CD4-positive, alpha-beta T cell (primary cell): ENCODE measurements at regions of chr6 and their contacts with region 1.

Region 1: DNA sequence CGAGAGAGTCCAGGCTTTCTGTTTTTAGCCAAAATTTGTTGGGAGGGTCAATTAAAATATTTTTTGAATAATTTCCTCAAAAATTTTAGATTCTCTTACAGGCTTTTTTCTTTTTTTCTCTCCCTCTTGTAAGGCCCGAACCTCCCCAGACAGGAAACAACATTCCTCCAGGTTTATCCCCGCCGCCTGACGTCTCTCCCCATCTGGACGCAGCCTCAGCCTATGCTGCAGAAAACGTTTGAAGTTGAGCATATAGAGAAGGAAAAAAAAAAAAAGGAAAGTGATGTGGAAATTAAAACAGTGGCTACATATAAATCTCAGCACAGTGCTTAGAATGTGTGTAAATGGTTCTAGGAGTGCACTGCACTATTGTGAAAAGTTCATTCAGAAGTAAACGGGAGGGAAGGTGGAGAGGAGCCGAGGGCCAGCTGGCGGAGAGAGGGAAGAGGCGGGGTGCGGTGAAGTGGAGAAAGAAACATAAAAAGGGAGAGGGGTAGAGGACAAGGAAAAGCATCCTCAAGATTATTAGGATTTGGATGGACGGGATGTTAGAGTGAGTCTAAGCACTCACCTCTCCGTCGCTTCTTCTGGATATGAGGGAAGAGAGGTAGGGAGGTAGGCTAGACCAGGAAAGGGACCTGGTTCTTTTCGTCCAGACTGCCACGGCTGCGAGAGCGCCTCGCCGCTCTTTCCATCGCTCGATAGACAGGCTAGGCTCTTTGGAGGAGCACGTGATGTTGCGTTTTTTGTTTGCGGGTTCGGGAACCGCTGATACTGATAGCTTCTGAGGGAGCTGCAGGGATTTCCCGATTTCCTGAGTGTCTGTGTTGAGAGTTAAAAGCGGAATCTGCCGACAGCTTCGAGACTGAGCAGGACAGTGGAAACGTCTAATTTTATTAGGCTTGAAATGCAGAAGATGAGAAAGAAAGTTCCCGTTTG is 98.7 kb downstream of the TRIM27 start:
- DNase-seq: no peak
- ATAC-seq: no peak
- H3K4me3 ChIP-seq: no peak overlapping the region
- H3K4me3 Mint-ChIP-seq: no peak overlapping the region
- H3K27ac ChIP-seq: no peak overlapping the region
- H3K27ac Mint-ChIP-seq: no peak overlapping the region
- H3K4me1 ChIP-seq: no peaks in the 10 kb centered on the region
- H3K4me1 Mint-ChIP-seq: peaks cover 11% of the 10 kb centered on the region
- H3K27me3 ChIP-seq: peaks cover 54 to 82% of the 10 kb centered on the region in 2 experiments
- H3K27me3 Mint-ChIP-seq: peaks cover 93% of the 10 kb centered on the region
- CTCF ChIP-seq: no peak

Region 2: GRCh38 chr6:28838634-28839442 is 13.8 kb after region 1 on chr6:
- CTCF ChIA-PET with region 1: no interaction called
- POLR2A ChIA-PET with region 1: no interaction called
- intact Hi-C with region 1: no loop called
- DNase-seq: peak; percentile 58 to 90 (median 74)
- ATAC-seq: peak; percentile 62
- H3K4me3 ChIP-seq: peak overlapping the region; percentile 65
- H3K4me3 Mint-ChIP-seq: peak overlapping the region; percentile 76
- H3K27ac ChIP-seq: peak overlapping the region; percentile 12 to 38
- H3K27ac Mint-ChIP-seq: peak overlapping the region; percentile 96
- H3K4me1 ChIP-seq: peaks cover 14% of the 10 kb centered on the region
- H3K4me1 Mint-ChIP-seq: peaks cover 22% of the 10 kb centered on the region
- H3K27me3 ChIP-seq: peaks cover 3 to 22% of the 10 kb centered on the region in 2 experiments
- H3K27me3 Mint-ChIP-seq: peaks cover 49% of the 10 kb centered on the region
- CTCF ChIP-seq: peak; percentile 77

Region 3: GRCh38 chr6:29376003-29376402 is 550.9 kb after region 1 on chr6:
- CTCF ChIA-PET with region 1: no interaction called
- POLR2A ChIA-PET with region 1: no interaction called
- intact Hi-C with region 1: loop called in 1 of 2 experiments (anchors 10 kb)
- DNase-seq: no peak
- ATAC-seq: no peak
- H3K4me3 ChIP-seq: no peak overlapping the region
- H3K4me3 Mint-ChIP-seq: no peak overlapping the region
- H3K27ac ChIP-seq: no peak overlapping the region
- H3K27ac Mint-ChIP-seq: no peak overlapping the region
- H3K4me1 ChIP-seq: no peaks in the 10 kb centered on the region
- H3K4me1 Mint-ChIP-seq: no peaks in the 10 kb centered on the region
- H3K27me3 ChIP-seq: peaks cover 5 to 23% of the 10 kb centered on the region in 2 experiments
- H3K27me3 Mint-ChIP-seq: peaks cover 60% of the 10 kb centered on the region
- CTCF ChIP-seq: no peak